ENCODE measurements at regions of chr20 and their contacts with region 1.

Region 1: GRCh38 chr20:25076731-25077609 is 5.0 kb downstream of the VSX1 start:
- DNase-seq: no peak
- ATAC-seq: peak in 3 of 4 donors; percentile 43 to 48 (median 45)
- H3K4me3 ChIP-seq: peak overlapping the region in 11 of 12 donors; percentile 5 to 47 (median 39)
- H3K27ac ChIP-seq: no peak overlapping the region
- H3K4me1 ChIP-seq: peaks cover 0 to 25% (median 13%) of the 10 kb centered on the region in 12 donors
- H3K27me3 ChIP-seq: peaks cover 14 to 79% (median 27%) of the 10 kb centered on the region in 9 donors
- CTCF ChIP-seq: peak in 6 of 12 donors; percentile 11 to 32 (median 20)
- POLR2A ChIP-seq: no peak

Region 2: DNA sequence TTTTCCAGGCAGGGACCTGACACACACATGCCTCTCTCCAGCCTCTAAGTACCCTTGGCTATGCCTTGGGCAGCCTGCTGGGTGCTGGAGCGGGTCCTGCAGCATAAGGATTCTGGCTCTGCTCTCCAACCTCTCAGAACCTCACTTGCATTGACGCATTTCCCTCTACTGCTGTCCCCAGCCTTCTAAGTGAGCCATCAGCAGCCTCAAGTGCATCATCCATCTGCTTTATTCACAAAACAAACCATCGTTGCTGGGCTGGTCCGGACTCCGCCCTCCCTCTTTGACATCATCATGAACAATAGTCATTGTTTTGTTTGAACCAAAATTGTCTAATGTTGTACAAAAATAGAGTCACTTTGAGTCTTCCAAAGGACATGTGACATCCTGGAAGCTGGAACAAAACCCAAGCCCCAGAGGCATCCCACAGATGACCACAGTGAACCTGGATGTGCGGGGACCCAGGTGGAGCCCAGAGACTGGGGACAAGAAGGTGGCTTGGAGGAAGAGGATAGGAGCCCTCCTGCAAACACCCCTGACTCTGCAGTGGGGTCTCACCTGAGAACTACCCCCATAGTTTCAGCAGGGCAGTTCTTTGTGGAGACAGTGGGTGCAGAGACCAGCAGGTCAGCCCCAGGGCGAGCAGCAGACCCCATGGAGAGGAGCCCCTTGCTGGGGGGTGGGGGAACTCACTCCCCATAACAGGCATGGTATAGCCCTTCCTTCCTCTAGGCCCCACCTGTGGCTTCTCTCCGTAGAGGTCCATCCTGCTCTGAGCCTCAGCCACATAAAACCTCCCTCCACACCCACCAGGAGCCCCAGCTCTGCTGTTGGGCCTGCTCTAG is 377.4 kb before region 1 on chr20:
- intact Hi-C with region 1: no loop called
- DNase-seq: peak in 2 of 5 donors; percentile 20 to 34
- ATAC-seq: peak in 2 of 4 donors; percentile 52 to 73
- H3K4me3 ChIP-seq: no peak overlapping the region
- H3K27ac ChIP-seq: peak overlapping the region in 4 of 12 donors; percentile 37 to 59 (median 46)
- H3K4me1 ChIP-seq: peaks cover 0 to 11% (median 5%) of the 10 kb centered on the region in 12 donors
- H3K27me3 ChIP-seq: no peaks in the 10 kb centered on the region
- CTCF ChIP-seq: no peak
- POLR2A ChIP-seq: no peak

Region 3: DNA sequence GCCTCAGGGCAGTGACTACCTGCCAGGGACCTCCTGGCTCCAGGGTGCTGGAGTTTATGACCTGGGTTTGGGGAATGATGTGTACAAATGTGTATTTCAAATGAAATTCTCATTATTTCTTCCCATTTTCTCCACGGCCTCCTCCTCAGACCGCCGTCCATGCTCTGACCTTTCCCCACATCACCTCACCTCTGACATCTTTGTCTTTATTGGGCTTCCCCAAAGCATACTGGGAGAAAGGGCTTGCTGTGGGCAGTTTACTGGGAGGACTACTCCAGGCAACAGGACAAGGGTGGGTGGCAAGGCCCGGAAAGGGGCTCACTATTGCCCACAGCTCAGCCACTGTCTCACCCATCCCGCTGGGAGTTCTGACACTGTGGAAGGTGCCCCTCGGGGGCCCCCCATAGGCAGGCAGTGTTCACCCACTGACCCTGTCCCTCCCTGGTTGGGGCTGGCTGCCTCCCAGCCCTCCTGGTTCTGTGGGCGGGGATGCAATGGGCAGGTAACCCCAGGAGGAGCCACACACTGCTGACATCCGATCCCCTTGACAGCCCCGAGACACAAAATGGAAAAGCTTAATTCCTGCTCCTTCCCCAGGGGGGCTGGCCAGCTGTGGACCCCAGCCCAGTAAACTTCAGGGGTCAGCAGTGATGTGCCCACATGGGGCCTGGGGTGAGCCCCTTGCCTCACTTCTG is 167.7 kb before region 1 on chr20:
- intact Hi-C with region 1: no loop called
- DNase-seq: no peak
- ATAC-seq: no peak
- H3K4me3 ChIP-seq: no peak overlapping the region
- H3K27ac ChIP-seq: no peak overlapping the region
- H3K4me1 ChIP-seq: no peaks in the 10 kb centered on the region
- H3K27me3 ChIP-seq: no peaks in the 10 kb centered on the region
- CTCF ChIP-seq: no peak
- POLR2A ChIP-seq: no peak

Region 4: DNA sequence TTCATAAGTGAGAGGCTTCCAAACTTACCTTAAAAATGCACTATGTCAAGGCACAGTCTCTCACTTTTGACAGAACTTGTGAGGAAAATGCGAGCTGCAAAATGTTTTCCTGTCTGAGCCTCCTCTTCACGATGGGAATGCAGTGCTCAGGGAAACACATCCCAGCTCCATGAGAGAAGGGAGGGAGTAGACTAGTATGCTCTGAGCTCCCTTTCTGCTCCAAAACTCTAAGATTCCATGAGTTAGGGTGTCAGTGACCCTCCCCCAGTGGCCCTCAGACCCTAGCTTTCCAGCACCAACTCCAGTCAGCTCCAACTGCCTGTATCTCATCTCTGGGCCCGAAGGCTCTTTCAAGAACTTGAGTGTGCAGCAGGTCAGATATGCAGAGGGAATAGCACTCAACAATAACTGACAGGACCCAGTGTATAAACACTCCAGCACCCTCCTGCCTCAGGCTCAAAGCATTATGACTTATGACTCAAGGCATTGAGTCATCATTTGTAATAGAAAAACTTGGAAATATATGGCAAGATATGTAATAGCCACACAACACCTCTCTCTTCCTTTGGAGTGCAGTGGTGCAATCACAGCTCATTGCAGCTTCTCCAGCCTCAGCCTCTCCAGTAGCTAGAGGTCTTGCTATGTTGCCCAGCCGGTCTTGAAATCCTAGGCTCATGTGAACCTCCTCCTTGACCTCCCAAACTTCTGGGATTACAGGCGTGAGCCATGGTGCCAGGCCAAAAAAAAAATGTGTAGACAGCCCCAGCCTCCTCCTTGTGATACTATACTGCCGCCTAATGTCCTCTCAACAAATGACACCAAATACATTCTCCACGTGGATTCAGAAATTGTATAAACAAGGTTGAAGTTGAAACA is 101.8 kb after region 1 on chr20:
- intact Hi-C with region 1: loop called in 4 of 10 experiments (anchors 2 to 5 kb)
- DNase-seq: no peak
- ATAC-seq: peak; percentile 67 to 90 (median 82)
- H3K4me3 ChIP-seq: no peak overlapping the region
- H3K27ac ChIP-seq: no peak overlapping the region
- H3K4me1 ChIP-seq: peaks cover 0 to 6% (median 0%) of the 10 kb centered on the region in 12 donors
- H3K27me3 ChIP-seq: no peaks in the 10 kb centered on the region
- CTCF ChIP-seq: peak; percentile 54 to 80 (median 70)
- POLR2A ChIP-seq: no peak

Region 5: DNA sequence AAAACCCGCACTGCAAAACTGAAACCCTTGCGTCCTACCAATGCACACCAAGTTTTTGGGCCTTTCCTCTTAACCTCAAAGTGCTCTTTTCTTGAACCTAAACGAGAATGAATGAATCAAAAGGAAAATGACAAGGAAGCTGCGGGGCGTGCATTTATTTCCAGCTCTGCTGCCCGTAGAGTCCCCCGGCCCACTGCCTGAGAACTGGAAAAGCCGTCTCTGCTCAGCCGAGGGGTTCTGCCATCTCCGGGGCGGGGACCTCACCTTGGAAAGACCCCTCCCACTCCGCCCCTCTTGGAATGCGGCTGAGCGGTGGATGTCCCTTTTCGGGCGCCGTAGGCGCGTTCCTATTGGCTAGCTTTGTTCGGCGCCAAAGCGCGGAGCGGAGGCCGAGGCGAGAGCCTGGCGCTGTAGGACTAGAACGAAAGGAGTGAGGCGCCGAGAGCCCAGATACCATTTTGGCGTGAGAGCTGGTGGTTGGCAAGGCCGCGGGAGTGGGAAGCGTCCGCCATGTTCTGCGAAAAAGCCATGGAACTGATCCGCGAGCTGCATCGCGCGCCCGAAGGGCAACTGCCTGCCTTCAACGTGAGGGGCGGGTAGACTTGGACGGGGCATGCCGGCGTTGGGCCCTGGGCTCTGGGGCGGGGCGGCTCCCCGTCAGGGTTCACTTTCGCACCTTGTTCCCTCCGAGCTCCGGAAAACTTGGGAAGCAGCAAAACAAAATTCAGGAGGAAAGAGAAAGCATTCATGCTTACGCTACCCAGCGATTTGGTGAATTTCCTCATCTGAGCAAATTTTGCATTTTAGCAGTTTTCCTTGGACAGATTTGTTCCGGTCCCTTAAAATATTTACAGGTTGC is 330.6 kb after region 1 on chr20 and contains the start of gene GINS1:
- intact Hi-C with region 1: loop called in 1 of 10 experiments (anchors 10 kb)
- DNase-seq: peak; percentile 82 to 91 (median 85)
- ATAC-seq: peak; percentile 68 to 98 (median 94)
- H3K4me3 ChIP-seq: peak within 1 kb of the TSS; percentile 30 to 84 (median 58)
- H3K27ac ChIP-seq: peak within 1 kb of the TSS in 8 of 12 donors; percentile 2 to 36 (median 26)
- H3K4me1 ChIP-seq: peaks cover 0 to 19% (median 7%) of the 10 kb centered on the region in 12 donors
- H3K27me3 ChIP-seq: no peaks in the 10 kb centered on the region
- CTCF ChIP-seq: no peak
- POLR2A ChIP-seq: no peak
- total RNA-seq, gene GINS1: 0.19 to 3.1 (median 0.36) TPM

Region 6: GRCh38 chr20:25543068-25543467 is 466.1 kb after region 1 on chr20:
- intact Hi-C with region 1: no loop called
- DNase-seq: no peak
- ATAC-seq: no peak
- H3K4me3 ChIP-seq: no peak overlapping the region
- H3K27ac ChIP-seq: no peak overlapping the region
- H3K4me1 ChIP-seq: peaks cover 0 to 20% (median 8%) of the 10 kb centered on the region in 12 donors
- H3K27me3 ChIP-seq: no peaks in the 10 kb centered on the region
- CTCF ChIP-seq: no peak
- POLR2A ChIP-seq: no peak